ENCODE measurements at regions of chrX and their contacts with region 1.

Region 1: GRCh38 chrX:103533511-103534216 is 14.4 kb upstream of the RAB40A start:
- DNase-seq: peak; percentile 84
- ATAC-seq: peak; percentile 74
- H3K4me3 Mint-ChIP-seq: peak overlapping the region; percentile 43
- H3K27ac Mint-ChIP-seq: no peak overlapping the region
- H3K4me1 Mint-ChIP-seq: peaks cover 3% of the 10 kb centered on the region
- H3K27me3 Mint-ChIP-seq: no peaks in the 10 kb centered on the region
- CTCF ChIP-seq: peak; percentile 67

Region 2: GRCh38 chrX:103520386-103520785 is 13.3 kb before region 1 on chrX:
- CTCF ChIA-PET with region 1: interaction called, 12 read pairs
- POLR2A ChIA-PET with region 1: no interaction called
- intact Hi-C with region 1: no loop called
- DNase-seq: no peak
- ATAC-seq: no peak
- H3K4me3 Mint-ChIP-seq: no peak overlapping the region
- H3K27ac Mint-ChIP-seq: no peak overlapping the region
- H3K4me1 Mint-ChIP-seq: no peaks in the 10 kb centered on the region
- H3K27me3 Mint-ChIP-seq: no peaks in the 10 kb centered on the region
- CTCF ChIP-seq: no peak

Region 3: DNA sequence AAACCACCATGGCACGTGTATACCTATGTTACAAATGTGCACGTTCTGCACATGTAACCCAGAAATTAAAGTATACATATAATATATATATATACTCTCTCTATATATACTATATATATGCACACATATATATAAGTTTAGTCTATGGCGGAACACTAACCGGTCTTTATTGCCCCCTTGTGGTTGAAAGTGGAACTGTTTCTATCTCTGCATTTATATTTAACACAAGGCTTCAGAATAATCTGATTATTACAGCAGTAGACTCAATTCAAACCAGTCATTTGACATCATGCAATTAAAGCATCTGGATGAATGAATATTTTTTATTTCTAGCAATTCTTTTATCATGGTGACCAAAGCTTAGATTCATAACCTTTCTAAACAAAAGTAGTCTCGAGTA is 283.8 kb after region 1 on chrX:
- CTCF ChIA-PET with region 1: interaction called, 3 read pairs
- POLR2A ChIA-PET with region 1: no interaction called
- intact Hi-C with region 1: loop called (anchors 5 kb)
- DNase-seq: peak; percentile 19
- ATAC-seq: peak; percentile 80
- H3K4me3 Mint-ChIP-seq: no peak overlapping the region
- H3K27ac Mint-ChIP-seq: no peak overlapping the region
- H3K4me1 Mint-ChIP-seq: no peaks in the 10 kb centered on the region
- H3K27me3 Mint-ChIP-seq: peaks cover 14% of the 10 kb centered on the region
- CTCF ChIP-seq: peak; percentile 49